Right cardiac atrium (tissue), 5 donors: ENCODE measurements at regions of chr9 and their contacts with region 1.

Region 1: GRCh38 chr9:15104826-15105420 is 194.7 kb upstream of the FREM1 start:
- DNase-seq: no peak
- ATAC-seq: peak in 1 of 2 donors; percentile 45
- H3K4me3 ChIP-seq: no peak overlapping the region
- H3K27ac ChIP-seq: no peak overlapping the region
- H3K4me1 ChIP-seq: no peaks in the 10 kb centered on the region
- H3K27me3 ChIP-seq: no peaks in the 10 kb centered on the region

Region 2: DNA sequence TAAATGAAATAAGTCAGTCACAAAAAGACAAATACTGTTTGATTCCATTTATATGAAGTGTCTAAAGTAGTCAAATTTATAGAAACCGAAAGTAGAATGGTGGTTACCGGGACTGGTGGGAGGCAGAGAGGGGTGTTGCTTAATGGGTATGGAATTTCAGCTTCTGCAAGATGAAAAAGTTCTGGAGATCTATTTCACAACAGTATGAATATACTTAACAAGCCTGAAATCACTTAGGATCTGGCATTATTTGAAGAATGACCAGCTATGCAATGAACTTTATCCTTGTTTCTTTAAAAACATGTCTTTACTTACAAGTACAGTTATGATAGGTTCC is 180.1 kb before region 1 on chr9:
- intact Hi-C with region 1: no loop called
- DNase-seq: no peak
- ATAC-seq: peak; percentile 49 to 74
- H3K4me3 ChIP-seq: no peak overlapping the region
- H3K27ac ChIP-seq: no peak overlapping the region
- H3K4me1 ChIP-seq: peaks cover 2% of the 10 kb centered on the region
- H3K27me3 ChIP-seq: no peaks in the 10 kb centered on the region

Region 3: DNA sequence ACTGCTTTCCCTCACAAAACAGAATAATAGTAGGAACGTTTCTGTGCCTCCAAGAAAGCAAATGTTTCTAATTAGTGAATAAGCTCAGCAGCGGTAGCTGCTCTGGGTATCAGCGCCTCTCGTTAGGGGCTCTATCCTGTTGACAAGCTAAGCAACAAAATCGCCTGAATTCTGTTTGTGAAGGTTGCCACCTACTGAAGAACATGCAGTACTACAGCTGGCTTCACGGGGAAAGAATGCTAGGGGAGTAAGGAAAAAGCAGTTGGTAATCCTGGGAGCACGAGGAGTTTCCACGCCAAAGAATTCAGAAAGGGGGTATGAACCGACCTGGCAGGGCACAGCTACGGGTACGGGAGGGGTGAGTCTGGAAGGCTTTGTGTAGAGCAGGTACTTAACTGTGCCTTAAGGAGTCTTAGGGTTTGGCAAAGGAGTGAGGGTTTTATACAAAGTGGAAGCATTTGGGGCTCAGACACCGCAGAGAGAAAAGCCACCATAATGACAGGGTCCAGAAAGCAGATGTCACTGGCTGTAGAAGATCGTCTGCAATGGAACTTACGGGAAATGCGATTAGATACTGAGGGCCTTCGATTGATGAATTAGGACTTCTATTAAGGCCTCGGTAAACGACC is 30.4 kb after region 1 on chr9:
- intact Hi-C with region 1: loop called in 2 of 4 experiments (anchors 2 kb)
- DNase-seq: peak in 2 of 3 donors; percentile 31 to 64
- ATAC-seq: peak; percentile 87 to 89
- H3K4me3 ChIP-seq: peak overlapping the region; percentile 12
- H3K27ac ChIP-seq: no peak overlapping the region
- H3K4me1 ChIP-seq: no peaks in the 10 kb centered on the region
- H3K27me3 ChIP-seq: no peaks in the 10 kb centered on the region